MCF 10A (cell line): ENCODE measurements at regions of chr9 and their contacts with region 1.

Region 1: GRCh38 chr9:69919461-69920061 is 98.9 kb downstream of the CFAP95 start:
- DNase-seq: peak; percentile 66
- H3K4me3 Mint-ChIP-seq: no peak overlapping the region
- H3K27ac Mint-ChIP-seq: no peak overlapping the region
- H3K4me1 Mint-ChIP-seq: no peaks in the 10 kb centered on the region
- H3K27me3 Mint-ChIP-seq: peaks cover 27% of the 10 kb centered on the region
- CTCF ChIP-seq: peak; percentile 57

Region 2: GRCh38 chr9:69672596-69673310 is 246.8 kb before region 1 on chr9:
- CTCF ChIA-PET with region 1: interaction called, 15 read pairs
- POLR2A ChIA-PET with region 1: no interaction called
- intact Hi-C with region 1: loop called (anchors 5 kb)
- DNase-seq: peak; percentile 84
- H3K4me3 Mint-ChIP-seq: peak overlapping the region; percentile 70
- H3K27ac Mint-ChIP-seq: no peak overlapping the region
- H3K4me1 Mint-ChIP-seq: peaks cover 6% of the 10 kb centered on the region
- H3K27me3 Mint-ChIP-seq: peaks cover 15% of the 10 kb centered on the region
- CTCF ChIP-seq: peak; percentile 82

Region 3: GRCh38 chr9:69891696-69892095 is 27.9 kb before region 1 on chr9:
- CTCF ChIA-PET with region 1: interaction called, 14 read pairs
- POLR2A ChIA-PET with region 1: interaction called, 3 read pairs
- intact Hi-C with region 1: no loop called
- DNase-seq: no peak
- H3K4me3 Mint-ChIP-seq: no peak overlapping the region
- H3K27ac Mint-ChIP-seq: no peak overlapping the region
- H3K4me1 Mint-ChIP-seq: no peaks in the 10 kb centered on the region
- H3K27me3 Mint-ChIP-seq: no peaks in the 10 kb centered on the region
- CTCF ChIP-seq: no peak

Region 4: GRCh38 chr9:69905291-69905690 is 14.3 kb before region 1 on chr9:
- CTCF ChIA-PET with region 1: interaction called, 13 read pairs
- POLR2A ChIA-PET with region 1: no interaction called
- intact Hi-C with region 1: no loop called
- DNase-seq: no peak
- H3K4me3 Mint-ChIP-seq: no peak overlapping the region
- H3K27ac Mint-ChIP-seq: no peak overlapping the region
- H3K4me1 Mint-ChIP-seq: no peaks in the 10 kb centered on the region
- H3K27me3 Mint-ChIP-seq: no peaks in the 10 kb centered on the region
- CTCF ChIP-seq: no peak

Region 5: GRCh38 chr9:69937833-69938535 is 18.4 kb after region 1 on chr9:
- CTCF ChIA-PET with region 1: interaction called, 13 read pairs
- POLR2A ChIA-PET with region 1: no interaction called
- intact Hi-C with region 1: no loop called
- DNase-seq: no peak
- H3K4me3 Mint-ChIP-seq: no peak overlapping the region
- H3K27ac Mint-ChIP-seq: peak overlapping the region; percentile 8
- H3K4me1 Mint-ChIP-seq: peaks cover 8% of the 10 kb centered on the region
- H3K27me3 Mint-ChIP-seq: no peaks in the 10 kb centered on the region
- CTCF ChIP-seq: no peak